Activated CD4-positive, alpha-beta T cell treated with anti-CD3 and anti-CD28 coated beads for 36 hours (primary cell): ENCODE measurements at regions of chr11 and their contacts with region 1.

Region 1: GRCh38 chr11:36509694-36510566 is at the start of gene TRAF6:
- DNase-seq: peak; percentile 95
- ATAC-seq: peak; percentile 95
- H3K4me3 Mint-ChIP-seq: peak within 1 kb of the TSS; percentile 95
- H3K27ac Mint-ChIP-seq: peak within 1 kb of the TSS; percentile 88
- H3K4me1 Mint-ChIP-seq: peaks cover 32% of the 10 kb centered on the region
- H3K27me3 Mint-ChIP-seq: peaks cover 5% of the 10 kb centered on the region
- total RNA-seq, gene TRAF6: 11.1 to 12.5 TPM

Region 2: GRCh38 chr11:36149538-36150242 is 360.2 kb before region 1 on chr11:
- CTCF ChIA-PET with region 1: no interaction called
- POLR2A ChIA-PET with region 1: no interaction called
- intact Hi-C with region 1: loop called in 1 of 2 experiments (anchors 10 kb)
- DNase-seq: peak; percentile 72
- ATAC-seq: peak; percentile 98
- H3K4me3 Mint-ChIP-seq: no peak overlapping the region
- H3K27ac Mint-ChIP-seq: no peak overlapping the region
- H3K4me1 Mint-ChIP-seq: peaks cover 16% of the 10 kb centered on the region
- H3K27me3 Mint-ChIP-seq: peaks cover 13% of the 10 kb centered on the region

Region 3: DNA sequence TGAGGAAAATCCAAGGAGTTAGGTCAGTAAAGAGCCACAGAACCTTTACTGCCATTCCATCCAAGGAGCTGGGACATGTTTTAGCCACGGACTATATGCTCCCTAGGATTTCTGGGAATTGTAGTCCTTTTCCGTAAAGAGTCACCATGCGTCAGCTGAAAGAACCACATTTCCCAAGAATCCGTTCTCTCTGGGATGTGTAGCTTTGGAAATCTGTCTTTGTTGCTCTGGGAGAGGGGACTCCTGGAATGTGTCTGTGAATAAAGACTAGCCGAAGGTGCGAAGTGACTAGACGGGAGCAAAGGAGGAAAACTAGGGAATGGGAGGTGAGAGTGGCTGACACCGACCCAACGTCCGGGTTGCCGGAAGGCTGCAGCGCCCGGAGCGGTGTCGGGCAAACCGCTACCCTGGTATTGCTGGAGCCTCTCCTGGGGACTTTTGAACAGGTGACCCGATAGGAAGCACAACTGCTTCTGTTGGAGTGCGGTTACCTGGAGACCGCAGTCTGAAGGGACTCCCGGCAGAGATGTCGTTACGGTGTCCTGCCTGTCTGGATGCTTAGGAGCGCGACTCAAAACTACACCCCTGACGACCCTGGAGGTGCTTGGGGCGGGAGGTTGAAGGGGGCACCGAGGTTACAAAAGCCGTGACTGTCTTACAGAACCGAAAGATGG is 84.5 kb after region 1 on chr11 and contains the start of gene IFTAP:
- CTCF ChIA-PET with region 1: no interaction called
- POLR2A ChIA-PET with region 1: no interaction called
- intact Hi-C with region 1: loop called in 1 of 2 experiments (anchors 1 kb)
- DNase-seq: peak; percentile 62
- ATAC-seq: peak; percentile 86
- H3K4me3 Mint-ChIP-seq: peak within 1 kb of the TSS; percentile 86
- H3K27ac Mint-ChIP-seq: peak within 1 kb of the TSS; percentile 55
- H3K4me1 Mint-ChIP-seq: peaks cover 13% of the 10 kb centered on the region
- H3K27me3 Mint-ChIP-seq: peaks cover 18% of the 10 kb centered on the region
- total RNA-seq, gene IFTAP: 5.7 to 6.3 TPM

Region 4: DNA sequence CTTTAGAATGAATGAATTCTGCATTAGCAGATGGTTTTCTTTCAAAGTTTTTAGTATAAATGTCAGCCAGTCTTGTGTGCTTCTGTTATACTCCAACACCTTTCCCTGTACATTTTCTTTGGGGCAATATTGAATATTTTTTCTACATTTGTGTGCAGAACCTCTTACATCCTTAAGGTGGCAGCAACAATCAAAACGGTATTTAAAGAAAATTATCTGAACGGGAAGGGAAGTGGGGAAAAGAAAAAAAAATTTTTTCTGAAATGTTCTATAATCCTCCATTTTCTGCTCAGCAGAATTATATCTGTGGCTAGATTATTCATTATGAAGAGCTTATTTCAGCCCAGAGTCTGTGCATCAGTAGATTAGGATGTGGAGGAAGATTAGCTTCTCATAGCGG is 435.5 kb after region 1 on chr11:
- CTCF ChIA-PET with region 1: no interaction called
- POLR2A ChIA-PET with region 1: no interaction called
- intact Hi-C with region 1: no loop called
- DNase-seq: no peak
- ATAC-seq: no peak
- H3K4me3 Mint-ChIP-seq: no peak overlapping the region
- H3K27ac Mint-ChIP-seq: no peak overlapping the region
- H3K4me1 Mint-ChIP-seq: no peaks in the 10 kb centered on the region
- H3K27me3 Mint-ChIP-seq: no peaks in the 10 kb centered on the region